ENCODE measurements at regions of chr14 and their contacts with region 1.

Region 1: DNA sequence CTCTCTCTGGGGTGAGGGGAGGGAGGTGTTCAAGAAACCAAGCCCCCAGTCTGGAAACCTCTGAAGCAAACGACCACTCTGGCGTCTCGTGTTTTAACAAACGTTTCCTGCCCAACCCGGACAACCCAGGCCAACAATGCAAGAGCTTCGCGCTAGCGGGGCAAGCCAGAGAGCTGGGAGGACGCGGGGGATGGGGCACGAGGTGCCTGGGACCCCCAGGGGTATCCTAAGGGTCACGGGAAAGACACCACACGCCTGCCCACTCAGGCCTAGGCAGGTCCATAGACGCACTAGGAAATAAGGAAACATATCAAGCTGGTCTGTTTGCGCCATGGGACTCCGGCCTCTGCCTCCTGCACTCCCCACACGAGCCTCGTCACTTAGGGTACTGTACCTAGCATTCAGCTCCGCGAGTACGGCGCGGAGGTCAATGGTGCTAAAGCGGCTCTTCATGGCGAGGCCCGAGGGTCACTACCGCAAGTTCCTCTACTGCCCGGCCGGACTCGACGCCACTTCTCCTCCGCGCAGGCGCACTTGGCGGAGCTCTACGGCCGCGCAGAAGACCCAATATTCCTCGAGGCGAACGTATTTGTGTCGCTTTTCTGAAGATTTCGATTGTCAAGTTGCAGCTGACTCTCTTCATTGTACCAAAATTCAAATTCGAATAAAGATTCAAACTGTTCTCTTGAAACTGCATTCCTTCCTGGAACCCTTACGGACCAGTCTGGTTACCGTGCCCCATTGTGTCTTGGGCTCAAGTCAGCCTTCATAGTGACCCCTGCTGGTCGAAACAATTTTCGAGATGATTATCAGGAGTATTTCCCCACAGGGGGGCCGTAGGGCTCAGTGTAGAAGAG is at the start of gene NEMF:
- DNase-seq: peak; percentile 75 to 84 (median 79)
- H3K4me3 ChIP-seq: peak within 1 kb of the TSS; percentile 83 to 93
- H3K4me3 Mint-ChIP-seq: peak within 1 kb of the TSS; percentile 91 to 98 (median 96)
- H3K27ac ChIP-seq: peak within 1 kb of the TSS; percentile 76
- H3K27ac Mint-ChIP-seq: peak within 1 kb of the TSS; percentile 88 to 99 (median 97)
- H3K4me1 ChIP-seq: peaks cover 37% of the 10 kb centered on the region
- H3K4me1 Mint-ChIP-seq: peaks cover 21 to 53% (median 38%) of the 10 kb centered on the region in 4 donors
- H3K27me3 ChIP-seq: no peaks in the 10 kb centered on the region
- H3K27me3 Mint-ChIP-seq: no peaks in the 10 kb centered on the region
- total RNA-seq, gene NEMF: 104 to 112 TPM

Region 2: GRCh38 chr14:49461529-49462401 is 390.8 kb before region 1 on chr14:
- CTCF ChIA-PET with region 1: interaction called, 18 read pairs
- POLR2A ChIA-PET with region 1: interaction called, 4 read pairs
- intact Hi-C with region 1: loop called (anchors 2 kb)
- DNase-seq: peak; percentile 63 to 68 (median 67)
- H3K4me3 ChIP-seq: no peak overlapping the region
- H3K4me3 Mint-ChIP-seq: no peak overlapping the region
- H3K27ac ChIP-seq: no peak overlapping the region
- H3K27ac Mint-ChIP-seq: no peak overlapping the region
- H3K4me1 ChIP-seq: no peaks in the 10 kb centered on the region
- H3K4me1 Mint-ChIP-seq: no peaks in the 10 kb centered on the region
- H3K27me3 ChIP-seq: no peaks in the 10 kb centered on the region
- H3K27me3 Mint-ChIP-seq: peaks cover 2 to 3% of the 10 kb centered on the region in 2 donors

Region 3: GRCh38 chr14:49692811-49693734 is 159.5 kb before region 1 on chr14 and contains the start of gene KLHDC1:
- CTCF ChIA-PET with region 1: no interaction called
- POLR2A ChIA-PET with region 1: interaction called, 3 read pairs
- intact Hi-C with region 1: loop called (anchors 5 kb)
- DNase-seq: peak; percentile 77 to 83 (median 79)
- H3K4me3 ChIP-seq: peak within 1 kb of the TSS; percentile 49 to 72
- H3K4me3 Mint-ChIP-seq: peak within 1 kb of the TSS; percentile 87 to 99 (median 90)
- H3K27ac ChIP-seq: peak within 1 kb of the TSS; percentile 64
- H3K27ac Mint-ChIP-seq: peak within 1 kb of the TSS; percentile 77 to 96 (median 93)
- H3K4me1 ChIP-seq: peaks cover 23% of the 10 kb centered on the region
- H3K4me1 Mint-ChIP-seq: peaks cover 23 to 38% (median 25%) of the 10 kb centered on the region in 4 donors
- H3K27me3 ChIP-seq: no peaks in the 10 kb centered on the region
- H3K27me3 Mint-ChIP-seq: no peaks in the 10 kb centered on the region
- total RNA-seq, gene KLHDC1: 12.9 to 13.6 TPM

Region 4: GRCh38 chr14:49879683-49880204 is 27.2 kb after region 1 on chr14:
- CTCF ChIA-PET with region 1: interaction called, 22 read pairs
- POLR2A ChIA-PET with region 1: interaction called, 3 read pairs
- intact Hi-C with region 1: no loop called
- DNase-seq: peak; percentile 63 to 72 (median 65)
- H3K4me3 ChIP-seq: no peak overlapping the region
- H3K4me3 Mint-ChIP-seq: no peak overlapping the region
- H3K27ac ChIP-seq: no peak overlapping the region
- H3K27ac Mint-ChIP-seq: peak overlapping the region; percentile 67 to 89 (median 82)
- H3K4me1 ChIP-seq: peaks cover 15% of the 10 kb centered on the region
- H3K4me1 Mint-ChIP-seq: peaks cover 6 to 12% (median 8%) of the 10 kb centered on the region in 4 donors
- H3K27me3 ChIP-seq: no peaks in the 10 kb centered on the region
- H3K27me3 Mint-ChIP-seq: no peaks in the 10 kb centered on the region

Region 5: DNA sequence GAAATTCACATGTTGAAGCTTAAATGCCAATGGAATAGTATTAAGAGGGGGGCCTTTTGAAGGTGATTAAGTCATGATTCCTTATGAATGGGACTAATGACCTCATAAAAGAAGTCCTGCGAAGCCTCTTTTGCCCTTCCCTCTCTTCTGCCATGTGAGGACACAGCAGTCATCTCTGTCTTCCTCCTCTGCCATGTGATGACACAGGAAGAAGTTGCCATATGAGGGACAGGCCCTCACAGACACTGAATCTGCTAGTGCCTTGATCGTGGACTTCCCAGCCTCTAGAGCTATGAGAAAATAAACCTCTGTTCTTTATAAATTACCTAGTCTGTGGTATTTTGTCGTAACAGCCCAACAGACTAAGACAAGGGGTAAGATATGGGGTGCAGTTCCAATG is 163.2 kb after region 1 on chr14:
- CTCF ChIA-PET with region 1: no interaction called
- POLR2A ChIA-PET with region 1: no interaction called
- intact Hi-C with region 1: no loop called
- DNase-seq: no peak
- H3K4me3 ChIP-seq: no peak overlapping the region
- H3K4me3 Mint-ChIP-seq: no peak overlapping the region
- H3K27ac ChIP-seq: no peak overlapping the region
- H3K27ac Mint-ChIP-seq: peak overlapping the region in 4 of 7 donors; percentile 3 to 65 (median 47)
- H3K4me1 ChIP-seq: no peaks in the 10 kb centered on the region
- H3K4me1 Mint-ChIP-seq: peaks cover 0 to 22% (median 8%) of the 10 kb centered on the region in 4 donors
- H3K27me3 ChIP-seq: no peaks in the 10 kb centered on the region
- H3K27me3 Mint-ChIP-seq: no peaks in the 10 kb centered on the region

Region 6: GRCh38 chr14:50045039-50045711 is 192.6 kb after region 1 on chr14:
- CTCF ChIA-PET with region 1: interaction called, 6 read pairs
- POLR2A ChIA-PET with region 1: interaction called, 18 read pairs
- intact Hi-C with region 1: no loop called
- DNase-seq: peak; percentile 59 to 79 (median 71)
- H3K4me3 ChIP-seq: peak overlapping the region in 1 of 2 donors; percentile 12
- H3K4me3 Mint-ChIP-seq: peak overlapping the region; percentile 28 to 89 (median 66)
- H3K27ac ChIP-seq: peak overlapping the region; percentile 64
- H3K27ac Mint-ChIP-seq: peak overlapping the region; percentile 89 to 97 (median 94)
- H3K4me1 ChIP-seq: peaks cover 75% of the 10 kb centered on the region
- H3K4me1 Mint-ChIP-seq: peaks cover 56 to 85% (median 71%) of the 10 kb centered on the region in 4 donors
- H3K27me3 ChIP-seq: no peaks in the 10 kb centered on the region
- H3K27me3 Mint-ChIP-seq: no peaks in the 10 kb centered on the region

Region 7: DNA sequence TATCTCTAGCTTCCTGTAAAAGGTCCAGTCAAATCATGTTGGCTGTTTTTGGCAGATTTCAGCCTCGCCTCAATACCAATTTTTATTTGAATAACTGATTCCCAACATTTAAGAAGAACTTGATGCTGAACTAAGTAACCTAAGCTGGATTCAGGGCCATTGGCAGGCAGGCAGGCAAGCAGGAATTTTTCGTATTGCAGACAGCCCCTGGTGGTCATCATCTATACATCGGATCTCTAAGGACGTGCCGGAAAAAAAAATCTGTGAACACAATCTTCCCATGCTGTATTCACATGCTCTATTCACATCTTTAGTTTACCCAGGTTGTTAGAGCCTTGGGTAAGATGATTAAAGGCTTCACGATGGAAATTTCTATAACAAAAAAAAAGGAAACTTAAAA is 256.8 kb after region 1 on chr14:
- CTCF ChIA-PET with region 1: interaction called, 64 read pairs
- POLR2A ChIA-PET with region 1: interaction called, 7 read pairs
- intact Hi-C with region 1: loop called (anchors 1 kb)
- DNase-seq: no peak
- H3K4me3 ChIP-seq: no peak overlapping the region
- H3K4me3 Mint-ChIP-seq: no peak overlapping the region
- H3K27ac ChIP-seq: no peak overlapping the region
- H3K27ac Mint-ChIP-seq: peak overlapping the region in 5 of 7 donors; percentile 19 to 56 (median 37)
- H3K4me1 ChIP-seq: peaks cover 15% of the 10 kb centered on the region
- H3K4me1 Mint-ChIP-seq: peaks cover 6 to 25% (median 14%) of the 10 kb centered on the region in 4 donors
- H3K27me3 ChIP-seq: no peaks in the 10 kb centered on the region
- H3K27me3 Mint-ChIP-seq: no peaks in the 10 kb centered on the region